ENCODE measurements at regions of chr19 and their contacts with region 1.

Region 1: DNA sequence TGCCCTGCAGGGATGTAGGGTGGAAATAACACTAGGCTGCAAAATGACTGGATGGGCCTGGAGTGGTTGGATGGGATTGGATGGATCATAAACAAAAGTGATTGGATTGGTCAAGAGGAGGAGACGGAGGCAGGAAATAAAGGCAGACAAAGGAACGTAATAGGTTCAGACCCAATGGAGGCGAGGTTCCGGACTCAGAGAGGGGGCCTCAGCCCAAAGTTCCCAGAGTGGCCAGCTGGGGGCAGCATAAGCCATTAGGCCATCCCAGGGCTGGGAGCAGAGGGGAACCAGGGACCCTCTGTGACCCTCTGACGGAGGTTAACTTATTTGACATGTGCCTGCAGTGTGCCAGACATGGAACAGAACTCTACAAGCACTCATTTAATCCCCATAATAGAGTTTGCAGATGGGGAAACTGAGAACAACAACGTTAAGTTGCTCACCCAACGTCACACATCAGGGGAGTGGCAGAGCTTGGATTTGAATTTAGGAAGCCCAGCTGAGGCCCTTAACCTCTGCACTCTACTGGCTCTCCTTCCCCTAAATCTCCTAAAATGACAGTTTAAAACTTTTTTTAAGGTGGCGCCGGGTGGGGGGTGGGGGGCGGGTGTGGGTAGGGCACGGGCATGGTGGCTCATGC is 15.3 kb upstream of the MAP1S start:
- DNase-seq: peak; percentile 76
- ATAC-seq: peak; percentile 84
- H3K4me3 Mint-ChIP-seq: no peak overlapping the region
- H3K27ac Mint-ChIP-seq: no peak overlapping the region
- H3K4me1 Mint-ChIP-seq: no peaks in the 10 kb centered on the region
- H3K27me3 Mint-ChIP-seq: peaks cover 6% of the 10 kb centered on the region

Region 2: GRCh38 chr19:17766543-17767131 is 62.7 kb after region 1 on chr19:
- CTCF ChIA-PET with region 1: interaction called, 12 read pairs
- DNase-seq: no peak
- ATAC-seq: no peak
- H3K4me3 Mint-ChIP-seq: no peak overlapping the region
- H3K27ac Mint-ChIP-seq: no peak overlapping the region
- H3K4me1 Mint-ChIP-seq: peaks cover 4% of the 10 kb centered on the region
- H3K27me3 Mint-ChIP-seq: no peaks in the 10 kb centered on the region

Region 3: DNA sequence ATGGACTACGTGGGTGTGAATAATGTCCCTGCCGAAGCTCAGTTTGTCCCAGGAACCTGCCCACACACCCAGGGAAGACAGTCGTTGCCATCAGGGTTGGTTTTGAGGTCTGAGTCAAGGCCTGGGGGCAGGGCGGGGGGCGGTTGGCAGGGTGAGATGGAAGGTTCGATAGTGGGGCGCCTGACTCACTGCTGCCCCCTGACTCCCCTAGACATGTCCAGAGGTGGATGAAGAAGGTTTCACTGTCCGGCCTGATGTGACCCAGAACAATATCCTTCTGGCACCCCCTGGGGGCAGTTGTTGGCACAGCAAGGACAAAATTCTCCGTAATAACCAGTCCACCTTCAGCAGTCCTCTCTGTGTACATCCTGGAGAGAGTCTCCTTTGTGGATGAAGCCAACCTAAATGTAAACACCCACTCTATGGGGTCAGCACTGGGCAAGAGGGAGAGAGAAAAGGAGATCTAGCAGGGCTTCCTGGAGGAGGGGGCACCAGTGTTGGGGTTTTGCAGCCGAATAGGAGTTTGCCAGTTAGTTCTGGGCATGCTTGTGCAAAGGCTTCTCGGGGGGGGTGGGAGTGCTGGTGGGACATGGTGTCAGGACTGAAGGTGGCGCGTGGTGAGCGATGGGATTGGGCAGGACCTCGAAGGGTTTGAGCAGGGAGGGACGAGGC is 71.4 kb after region 1 on chr19:
- CTCF ChIA-PET with region 1: interaction called, 35 read pairs
- DNase-seq: peak; percentile 59
- ATAC-seq: no peak
- H3K4me3 Mint-ChIP-seq: no peak overlapping the region
- H3K27ac Mint-ChIP-seq: no peak overlapping the region
- H3K4me1 Mint-ChIP-seq: peaks cover 20% of the 10 kb centered on the region
- H3K27me3 Mint-ChIP-seq: no peaks in the 10 kb centered on the region

Region 4: GRCh38 chr19:17784201-17785008 is 80.5 kb after region 1 on chr19:
- CTCF ChIA-PET with region 1: interaction called, 34 read pairs
- DNase-seq: peak; percentile 82
- ATAC-seq: peak; percentile 66
- H3K4me3 Mint-ChIP-seq: no peak overlapping the region
- H3K27ac Mint-ChIP-seq: no peak overlapping the region
- H3K4me1 Mint-ChIP-seq: peaks cover 3% of the 10 kb centered on the region
- H3K27me3 Mint-ChIP-seq: no peaks in the 10 kb centered on the region

Measured in activated CD8-positive, alpha-beta memory T cell treated with anti-CD3 and anti-CD28 coated beads, Interleukin-2, amount 10 ng/mL, durations not matched to agents 7 days and 5 days (primary cell).